GM18951 (cell line): ENCODE measurements at regions of chr20 and their contacts with region 1.

Region 1: DNA sequence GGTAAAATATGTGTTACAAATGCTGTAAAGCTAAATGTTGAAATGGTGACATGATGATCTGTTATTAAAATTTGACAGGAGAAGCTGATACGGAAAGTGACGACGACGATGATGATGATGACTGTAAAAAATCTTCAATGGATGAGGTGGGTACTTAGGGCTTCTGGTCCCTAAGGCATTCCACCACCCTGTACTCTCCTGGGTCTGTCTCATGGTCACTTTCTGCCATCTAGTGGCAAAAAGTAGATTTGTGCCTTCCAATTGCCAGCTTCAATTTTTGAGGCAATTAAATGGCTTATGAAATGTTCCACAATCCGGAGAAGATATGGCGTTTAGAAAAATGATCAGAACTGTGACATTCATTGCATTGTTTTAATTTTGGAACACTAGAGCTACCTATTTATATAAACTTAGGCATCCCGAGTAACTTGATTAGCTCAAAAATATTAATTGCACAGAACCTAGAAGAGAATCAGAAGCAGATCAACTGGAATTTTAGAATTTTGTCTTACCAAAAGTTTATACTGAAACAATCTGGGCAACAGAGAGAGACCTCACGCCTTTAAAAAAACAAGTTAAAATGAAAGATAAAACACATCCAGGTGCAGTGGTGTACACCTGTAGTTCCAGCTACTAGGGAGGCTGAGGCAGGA is 346.5 kb upstream of the PLCB4 start:
- POLR2A ChIP-seq: no peak

Region 2: DNA sequence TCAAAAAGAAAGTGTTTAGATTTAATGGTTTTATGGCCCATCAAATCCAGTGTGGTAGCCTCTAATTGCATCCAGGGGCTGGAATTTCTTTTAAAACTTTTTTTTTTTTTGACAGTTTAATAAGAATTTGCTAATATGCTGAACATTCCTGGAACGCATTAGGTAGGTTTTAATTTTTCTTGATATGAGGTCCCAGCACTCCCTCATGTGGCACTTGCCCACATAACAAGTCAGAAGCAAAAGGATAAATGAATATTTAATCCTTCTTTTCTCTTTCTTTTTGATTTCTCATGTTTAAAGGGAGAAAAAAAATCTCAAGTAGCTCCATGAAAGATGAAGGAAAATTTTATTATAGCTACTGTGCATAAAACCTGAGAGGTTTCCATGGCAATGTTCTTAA is 795.6 kb before region 1 on chr20:
- in situ Hi-C with region 1: loop called (anchors 25 kb)
- POLR2A ChIP-seq: no peak

Region 3: DNA sequence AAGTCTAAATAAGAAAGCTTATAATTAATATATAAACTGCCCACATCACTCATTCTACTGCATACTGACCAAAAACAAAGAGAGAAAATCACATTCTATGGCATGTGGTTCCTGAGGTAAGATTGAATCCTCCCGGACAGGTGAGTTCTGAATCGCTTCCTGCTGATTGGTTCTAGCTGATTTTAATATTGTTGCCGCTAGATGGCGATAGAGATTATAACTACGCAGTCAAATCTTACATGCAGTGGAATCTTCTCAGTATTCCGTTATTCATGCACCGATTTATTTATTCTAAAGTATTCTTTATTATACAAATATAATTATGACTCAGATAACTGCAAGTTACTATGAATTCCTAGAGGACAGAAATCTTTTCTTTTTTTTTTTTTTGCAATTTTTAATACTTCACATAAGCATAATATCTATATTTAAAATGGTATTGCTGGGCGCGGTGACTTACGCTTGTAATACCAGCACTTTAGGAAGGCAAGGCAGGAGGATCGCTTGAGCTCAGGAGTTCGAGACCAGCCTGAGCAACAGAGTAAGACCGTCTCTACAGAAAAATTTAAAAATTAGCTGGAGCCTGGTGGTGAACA is 678.6 kb before region 1 on chr20:
- in situ Hi-C with region 1: loop called (anchors 25 kb)
- POLR2A ChIP-seq: no peak